Ascending aorta (tissue), 2 donors: ENCODE measurements at regions of chr3 and their contacts with region 1.

Region 1: GRCh38 chr3:4712143-4712542 is 219.0 kb downstream of the ITPR1 start:
- DNase-seq: no peak
- H3K4me3 ChIP-seq: no peak overlapping the region
- H3K27ac ChIP-seq: no peak overlapping the region
- H3K4me1 ChIP-seq: no peaks in the 10 kb centered on the region
- H3K27me3 ChIP-seq: no peaks in the 10 kb centered on the region
- CTCF ChIP-seq: no peak

Region 2: GRCh38 chr3:4864503-4864902 is 152.4 kb after region 1 on chr3:
- intact Hi-C with region 1: no loop called
- DNase-seq: no peak
- H3K4me3 ChIP-seq: no peak overlapping the region
- H3K27ac ChIP-seq: no peak overlapping the region
- H3K4me1 ChIP-seq: peaks cover 0 to 9% of the 10 kb centered on the region in 2 donors
- H3K27me3 ChIP-seq: no peaks in the 10 kb centered on the region
- CTCF ChIP-seq: no peak

Region 3: DNA sequence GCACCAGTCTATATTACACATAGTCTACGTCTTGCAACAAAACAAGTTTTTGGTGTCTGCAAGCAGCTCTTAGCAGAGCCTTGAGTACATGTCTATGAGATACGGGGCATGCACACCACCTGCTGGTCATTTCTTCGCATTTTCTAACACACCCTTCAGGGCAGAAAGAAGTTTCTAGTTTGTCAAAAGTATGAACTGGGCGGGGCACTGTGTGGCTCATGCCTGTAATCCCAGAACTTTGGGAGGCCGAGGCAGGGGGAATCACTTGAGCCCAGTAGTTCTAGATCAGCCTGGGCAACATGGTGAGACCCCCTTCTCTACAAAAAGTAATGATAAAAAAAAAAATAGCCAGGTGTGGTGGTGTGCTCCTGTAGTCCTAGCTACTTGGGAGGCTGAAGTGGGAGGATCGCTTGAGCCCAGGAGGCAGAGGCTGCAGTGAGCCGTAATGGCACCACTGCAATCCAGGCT is 345.7 kb after region 1 on chr3:
- intact Hi-C with region 1: loop called (anchors 1 kb)
- DNase-seq: peak; percentile 49 to 89
- H3K4me3 ChIP-seq: no peak overlapping the region
- H3K27ac ChIP-seq: no peak overlapping the region
- H3K4me1 ChIP-seq: peaks cover 0 to 7% of the 10 kb centered on the region in 2 donors
- H3K27me3 ChIP-seq: no peaks in the 10 kb centered on the region
- CTCF ChIP-seq: peak; percentile 70 to 79 (median 77)

Region 4: DNA sequence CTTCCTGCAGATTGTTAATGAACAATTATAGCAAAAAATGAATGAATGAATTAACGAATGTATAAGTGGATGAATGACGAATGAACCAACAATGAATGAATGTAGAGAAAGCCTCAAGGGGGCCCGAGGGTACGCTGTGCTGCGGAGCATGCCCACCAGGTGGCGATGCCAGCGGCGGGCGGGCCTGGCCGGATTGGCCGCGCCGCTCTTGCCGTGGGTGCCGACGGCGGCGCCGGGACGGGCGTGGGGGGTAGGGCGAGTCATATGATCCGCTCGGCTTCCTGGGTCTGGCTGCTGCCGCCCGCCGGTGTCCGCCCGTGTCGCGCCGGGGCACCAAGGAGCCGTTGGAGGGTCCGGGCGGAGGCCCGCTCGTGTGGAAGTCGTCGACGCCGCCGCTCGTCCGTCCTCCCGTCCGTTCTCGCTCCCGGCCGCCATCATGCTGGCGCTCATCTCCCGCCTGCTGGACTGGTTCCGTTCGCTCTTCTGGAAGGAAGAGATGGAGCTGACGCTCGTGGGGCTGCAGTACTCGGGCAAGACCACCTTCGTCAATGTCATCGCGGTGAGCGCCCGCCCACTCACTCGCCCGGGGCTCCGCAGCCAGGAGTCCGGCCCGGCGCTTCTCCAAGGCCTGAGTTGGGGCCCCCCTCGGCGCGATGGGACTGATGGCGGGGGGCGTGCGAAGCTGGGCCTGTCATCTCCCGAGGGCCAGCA is 410.0 kb after region 1 on chr3 and contains the start of gene ARL8B:
- intact Hi-C with region 1: loop called (anchors 5 kb)
- DNase-seq: peak; percentile 42 to 94
- H3K4me3 ChIP-seq: peak within 1 kb of the TSS; percentile 87 to 98
- H3K27ac ChIP-seq: peak within 1 kb of the TSS; percentile 92 to 93
- H3K4me1 ChIP-seq: peaks cover 0 to 25% of the 10 kb centered on the region in 2 donors
- H3K27me3 ChIP-seq: no peaks in the 10 kb centered on the region
- CTCF ChIP-seq: peak; percentile 94 to 96 (median 94)
- total RNA-seq, gene ARL8B: 6.4 TPM